ENCODE measurements at regions of chr14 and their contacts with region 1.

Region 1: DNA sequence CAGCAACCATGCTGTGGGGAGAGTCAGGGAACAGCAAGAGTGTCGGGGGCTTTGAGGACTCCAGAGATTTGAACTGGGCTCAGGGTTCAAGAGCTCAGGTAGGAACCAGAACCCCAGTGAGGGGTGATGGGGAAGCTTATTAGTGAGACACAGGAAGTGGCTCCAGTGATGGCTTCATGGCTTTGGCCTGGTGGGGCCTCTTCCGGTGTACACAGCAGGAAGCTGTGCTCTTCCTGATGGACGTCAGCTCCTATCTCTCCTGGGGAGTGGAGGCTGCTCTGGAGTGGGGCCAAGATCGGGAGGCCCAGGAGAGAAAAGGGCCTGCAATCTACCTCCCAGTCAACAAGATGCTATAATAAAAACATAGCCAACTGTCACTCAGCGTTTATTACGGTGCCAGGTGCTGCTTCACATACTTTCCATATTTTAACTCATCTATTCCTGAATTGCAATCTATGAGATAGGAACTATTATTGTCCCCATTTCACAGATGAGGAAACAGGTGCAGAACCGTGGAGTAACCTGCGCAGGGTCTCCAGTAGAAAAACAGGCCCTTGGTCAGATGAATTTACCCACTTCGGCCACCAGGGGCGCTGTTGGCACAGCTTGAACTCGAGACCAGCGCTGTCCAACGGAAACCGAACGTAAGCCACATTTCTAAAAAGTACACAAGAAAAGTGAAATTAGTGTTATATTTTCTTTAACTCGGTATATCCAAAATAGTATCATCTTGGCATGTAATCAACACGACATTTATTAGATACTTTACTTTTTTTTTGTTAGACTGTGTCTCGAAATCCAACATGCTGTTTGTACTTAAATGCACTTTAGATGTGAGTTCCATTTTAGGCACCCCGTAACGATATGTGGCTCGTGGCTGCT is 63.6 kb upstream of the DLK1 start:
- DNase-seq: peak; percentile 77
- CTCF ChIP-seq: peak; percentile 82

Region 2: GRCh38 chr14:100524933-100525243 is 138.2 kb before region 1 on chr14:
- CTCF ChIA-PET with region 1: no interaction called
- POLR2A ChIA-PET with region 1: no interaction called
- DNase-seq: peak; percentile 38
- CTCF ChIP-seq: peak; percentile 23

Region 3: DNA sequence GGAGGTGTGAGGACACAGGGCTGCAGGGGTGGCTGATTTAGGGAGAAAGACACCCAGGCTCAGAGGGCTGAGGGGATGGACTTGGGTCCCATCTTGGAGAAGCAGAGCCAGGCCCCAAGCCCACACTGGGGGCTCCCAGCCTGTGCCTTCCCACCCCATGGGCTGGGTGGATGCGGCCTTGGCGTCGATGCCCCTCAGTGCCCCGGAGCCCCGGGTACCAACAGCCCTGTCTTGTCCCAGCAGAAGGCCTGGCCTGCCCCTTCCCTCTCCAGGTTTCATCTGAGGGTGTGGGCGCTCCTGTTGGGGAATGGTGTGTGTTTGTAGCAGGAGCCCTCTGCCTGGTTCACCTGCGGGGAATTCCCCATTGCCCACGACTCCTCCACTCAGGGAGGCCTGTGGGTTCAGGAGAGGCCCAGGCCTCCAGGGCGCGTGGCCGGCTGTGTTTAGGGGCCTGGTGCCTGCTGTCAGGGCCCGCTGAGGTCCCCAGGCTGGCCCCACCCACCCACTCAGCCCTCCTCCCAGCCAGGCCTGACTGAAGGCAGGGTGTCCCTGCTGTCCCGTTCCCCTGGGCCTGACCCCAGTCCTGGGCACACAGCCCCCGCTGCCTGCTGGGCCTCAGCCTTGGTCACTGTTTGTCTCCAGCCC is 24.8 kb before region 1 on chr14:
- CTCF ChIA-PET with region 1: no interaction called
- POLR2A ChIA-PET with region 1: no interaction called
- DNase-seq: no peak
- CTCF ChIP-seq: no peak

Region 4: GRCh38 chr14:100673036-100673806 is 10.1 kb after region 1 on chr14:
- CTCF ChIA-PET with region 1: interaction called, 27 read pairs
- POLR2A ChIA-PET with region 1: no interaction called
- DNase-seq: no peak
- CTCF ChIP-seq: no peak

Measured in GM10248 (cell line).